B cell (primary cell): ENCODE measurements at regions of chr5 and their contacts with region 1.

Region 1: GRCh38 chr5:132495667-132496190 is 5.2 kb upstream of the IRF1 start:
- DNase-seq: peak; percentile 91
- ATAC-seq: peak; percentile 58
- H3K4me3 ChIP-seq: peak overlapping the region; percentile 42 to 91 (median 84)
- H3K4me3 Mint-ChIP-seq: peak overlapping the region; percentile 97
- H3K27ac ChIP-seq: peak overlapping the region; percentile 85 to 95
- H3K27ac Mint-ChIP-seq: peak overlapping the region; percentile 97
- H3K4me1 ChIP-seq: peaks cover 48 to 59% of the 10 kb centered on the region in 2 donors
- H3K4me1 Mint-ChIP-seq: peaks cover 68% of the 10 kb centered on the region
- H3K27me3 ChIP-seq: no peaks in the 10 kb centered on the region
- H3K27me3 Mint-ChIP-seq: no peaks in the 10 kb centered on the region
- CTCF ChIP-seq: no peak

Region 2: DNA sequence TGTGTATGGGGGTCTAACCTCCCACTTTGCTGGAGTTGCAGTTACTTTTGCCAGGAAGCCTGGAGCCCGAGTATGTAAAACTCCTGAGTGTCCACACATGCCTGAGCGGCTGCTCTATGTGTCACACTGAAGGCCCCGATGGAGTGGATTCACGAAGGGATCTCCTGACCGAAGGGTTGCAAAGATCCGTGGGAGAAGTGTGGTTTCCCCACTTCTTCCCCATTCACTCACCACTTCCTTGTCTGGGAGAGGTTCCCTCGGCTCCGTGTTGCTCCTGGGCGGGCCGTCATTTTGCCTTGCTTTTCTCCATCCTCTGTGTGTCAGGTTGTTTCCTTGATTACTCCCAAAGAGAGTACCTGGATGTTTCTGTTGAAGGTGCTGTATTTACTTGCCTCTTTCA is 451.5 kb before region 1 on chr5:
- CTCF ChIA-PET with region 1: no interaction called
- POLR2A ChIA-PET with region 1: no interaction called
- intact Hi-C with region 1: no loop called
- DNase-seq: no peak
- ATAC-seq: no peak
- H3K4me3 ChIP-seq: no peak overlapping the region
- H3K4me3 Mint-ChIP-seq: no peak overlapping the region
- H3K27ac ChIP-seq: no peak overlapping the region
- H3K27ac Mint-ChIP-seq: no peak overlapping the region
- H3K4me1 ChIP-seq: no peaks in the 10 kb centered on the region
- H3K4me1 Mint-ChIP-seq: no peaks in the 10 kb centered on the region
- H3K27me3 ChIP-seq: peaks cover 0 to 20% (median 6%) of the 10 kb centered on the region in 4 experiments
- H3K27me3 Mint-ChIP-seq: peaks cover 35% of the 10 kb centered on the region
- CTCF ChIP-seq: no peak

Region 3: DNA sequence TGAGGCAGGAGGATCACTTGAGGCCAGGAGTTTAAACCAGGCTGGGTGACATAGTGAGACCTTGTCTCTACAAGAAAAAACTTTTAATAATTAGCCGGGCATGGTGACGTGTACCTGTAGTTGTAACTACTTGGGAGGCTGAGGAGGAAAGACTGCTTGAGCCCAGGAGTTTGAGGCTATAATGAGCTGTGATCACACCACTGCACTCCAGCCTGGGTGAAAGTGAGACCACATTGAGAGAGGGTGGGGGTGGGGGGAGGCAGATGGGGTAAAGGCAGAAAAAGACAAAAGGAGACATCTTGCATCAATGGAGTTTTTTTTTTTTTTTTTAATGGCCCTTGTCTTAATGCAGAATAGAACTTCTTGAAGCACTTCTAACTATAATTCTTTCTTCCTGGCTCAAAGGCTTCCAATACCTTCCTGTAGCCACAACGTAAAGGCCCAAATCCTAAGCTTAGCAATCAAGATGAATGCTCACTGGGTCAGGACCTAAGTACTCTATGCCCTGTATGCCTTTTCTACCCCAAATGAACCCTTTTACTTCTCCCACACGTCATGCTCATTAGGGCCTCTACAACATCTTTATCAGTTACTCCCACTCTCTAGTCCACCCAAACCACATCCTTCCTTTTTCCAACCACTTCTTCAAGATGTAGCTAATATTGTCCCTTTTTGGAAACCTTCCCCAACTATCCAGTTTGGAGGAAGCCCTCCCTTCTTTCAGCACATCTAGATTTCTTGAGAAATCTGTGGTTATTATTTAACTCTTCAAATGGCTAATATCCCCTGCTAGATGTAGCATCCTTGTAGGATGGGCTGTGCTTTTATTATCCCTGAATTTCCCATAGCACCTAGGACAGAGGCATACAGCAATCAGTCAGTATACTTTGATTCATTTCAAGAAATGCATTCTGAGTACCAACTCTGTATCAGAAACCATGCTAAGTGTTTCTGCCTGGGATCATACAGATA is 381.3 kb before region 1 on chr5:
- CTCF ChIA-PET with region 1: no interaction called
- POLR2A ChIA-PET with region 1: no interaction called
- intact Hi-C with region 1: no loop called
- DNase-seq: no peak
- ATAC-seq: no peak
- H3K4me3 ChIP-seq: no peak overlapping the region
- H3K4me3 Mint-ChIP-seq: no peak overlapping the region
- H3K27ac ChIP-seq: no peak overlapping the region
- H3K27ac Mint-ChIP-seq: no peak overlapping the region
- H3K4me1 ChIP-seq: peaks cover 3 to 9% of the 10 kb centered on the region in 2 donors
- H3K4me1 Mint-ChIP-seq: peaks cover 6% of the 10 kb centered on the region
- H3K27me3 ChIP-seq: no peaks in the 10 kb centered on the region
- H3K27me3 Mint-ChIP-seq: no peaks in the 10 kb centered on the region
- CTCF ChIP-seq: no peak

Region 4: GRCh38 chr5:132466433-132467286 is 29.1 kb before region 1 on chr5:
- CTCF ChIA-PET with region 1: interaction called, 31 read pairs
- POLR2A ChIA-PET with region 1: interaction called, 51 read pairs
- intact Hi-C with region 1: no loop called
- DNase-seq: peak; percentile 72
- ATAC-seq: peak; percentile 61
- H3K4me3 ChIP-seq: peak overlapping the region; percentile 10 to 53 (median 35)
- H3K4me3 Mint-ChIP-seq: peak overlapping the region; percentile 62
- H3K27ac ChIP-seq: peak overlapping the region; percentile 70 to 72
- H3K27ac Mint-ChIP-seq: peak overlapping the region; percentile 77
- H3K4me1 ChIP-seq: peaks cover 71 to 83% of the 10 kb centered on the region in 2 donors
- H3K4me1 Mint-ChIP-seq: peaks cover 85% of the 10 kb centered on the region
- H3K27me3 ChIP-seq: no peaks in the 10 kb centered on the region
- H3K27me3 Mint-ChIP-seq: no peaks in the 10 kb centered on the region
- CTCF ChIP-seq: no peak

Region 5: DNA sequence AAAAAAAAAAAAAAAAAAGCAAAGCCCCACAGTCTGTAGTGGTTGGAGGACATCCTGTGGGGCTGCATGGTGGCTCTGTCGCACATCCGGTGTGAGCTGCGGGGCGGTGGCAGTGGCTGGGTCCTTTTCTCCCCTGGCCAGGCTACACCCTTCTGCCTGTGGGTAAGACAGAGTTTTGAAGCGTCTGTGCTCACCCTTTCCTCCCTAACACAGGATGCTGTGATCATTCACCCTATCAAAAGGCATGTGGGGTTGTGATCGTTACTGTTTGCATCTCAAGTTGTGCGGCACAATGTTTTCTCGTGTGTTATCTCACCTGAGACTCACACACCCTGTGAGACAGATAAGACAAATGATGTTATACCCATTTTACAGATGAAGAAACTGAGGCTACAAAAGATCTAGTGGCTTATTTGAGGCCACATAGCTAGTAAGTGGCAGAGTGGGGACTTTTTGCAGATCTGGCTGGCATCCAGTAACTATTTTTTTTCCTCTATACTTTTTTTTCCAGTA is 22.7 kb before region 1 on chr5:
- CTCF ChIA-PET with region 1: interaction called, 60 read pairs
- POLR2A ChIA-PET with region 1: interaction called, 101 read pairs
- intact Hi-C with region 1: no loop called
- DNase-seq: peak; percentile 88
- ATAC-seq: peak; percentile 86
- H3K4me3 ChIP-seq: no peak overlapping the region
- H3K4me3 Mint-ChIP-seq: peak overlapping the region; percentile 83
- H3K27ac ChIP-seq: peak overlapping the region; percentile 81 to 93
- H3K27ac Mint-ChIP-seq: peak overlapping the region; percentile 99
- H3K4me1 ChIP-seq: peaks cover 46 to 75% of the 10 kb centered on the region in 2 donors
- H3K4me1 Mint-ChIP-seq: peaks cover 78% of the 10 kb centered on the region
- H3K27me3 ChIP-seq: no peaks in the 10 kb centered on the region
- H3K27me3 Mint-ChIP-seq: no peaks in the 10 kb centered on the region
- CTCF ChIP-seq: no peak

Region 6: DNA sequence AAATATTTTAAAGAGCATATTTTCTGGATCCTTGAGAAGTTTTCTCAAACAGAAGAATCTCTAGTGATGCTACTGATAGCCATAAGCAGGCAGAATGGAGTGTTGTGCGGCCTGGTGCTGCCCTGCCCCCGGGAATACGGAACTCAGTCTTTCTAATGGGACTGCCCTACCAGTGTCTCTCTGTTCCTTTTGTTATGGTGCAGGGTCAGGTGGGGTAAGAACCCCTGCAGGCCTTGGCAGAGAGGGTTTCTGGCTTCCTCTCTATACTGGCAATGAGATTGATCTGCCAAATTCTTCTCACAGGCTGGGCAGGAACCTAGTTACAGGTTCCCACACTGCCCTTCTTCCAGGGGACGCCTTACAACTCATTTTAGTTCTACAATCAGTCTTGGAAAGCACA is 45.0 kb after region 1 on chr5:
- CTCF ChIA-PET with region 1: no interaction called
- POLR2A ChIA-PET with region 1: no interaction called
- intact Hi-C with region 1: no loop called
- DNase-seq: no peak
- ATAC-seq: no peak
- H3K4me3 ChIP-seq: no peak overlapping the region
- H3K4me3 Mint-ChIP-seq: no peak overlapping the region
- H3K27ac ChIP-seq: no peak overlapping the region
- H3K27ac Mint-ChIP-seq: no peak overlapping the region
- H3K4me1 ChIP-seq: no peaks in the 10 kb centered on the region
- H3K4me1 Mint-ChIP-seq: no peaks in the 10 kb centered on the region
- H3K27me3 ChIP-seq: peaks cover 0 to 8% (median under 1%) of the 10 kb centered on the region in 4 experiments
- H3K27me3 Mint-ChIP-seq: peaks cover 17% of the 10 kb centered on the region
- CTCF ChIP-seq: no peak

Region 7: DNA sequence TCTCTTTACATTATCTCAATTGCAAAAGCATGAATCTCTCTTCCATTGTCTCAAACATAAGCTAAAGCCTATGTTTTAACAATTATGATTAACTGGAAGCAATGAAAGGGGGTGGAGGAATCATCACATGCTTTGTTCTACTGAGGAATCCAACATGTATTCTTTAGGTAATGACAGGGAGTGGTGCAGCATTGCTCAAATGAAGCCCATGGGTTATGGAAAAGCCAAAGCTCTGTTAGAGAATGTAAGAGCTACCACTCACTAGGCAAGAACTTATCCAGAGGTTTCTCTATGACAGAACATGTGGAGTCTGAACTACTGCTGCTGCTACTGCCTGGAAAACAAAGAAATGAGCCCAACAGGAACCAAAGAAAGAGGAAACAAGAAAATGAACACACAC is 212.9 kb after region 1 on chr5:
- CTCF ChIA-PET with region 1: no interaction called
- POLR2A ChIA-PET with region 1: no interaction called
- intact Hi-C with region 1: no loop called
- DNase-seq: no peak
- ATAC-seq: no peak
- H3K4me3 ChIP-seq: no peak overlapping the region
- H3K4me3 Mint-ChIP-seq: no peak overlapping the region
- H3K27ac ChIP-seq: no peak overlapping the region
- H3K27ac Mint-ChIP-seq: no peak overlapping the region
- H3K4me1 ChIP-seq: no peaks in the 10 kb centered on the region
- H3K4me1 Mint-ChIP-seq: no peaks in the 10 kb centered on the region
- H3K27me3 ChIP-seq: no peaks in the 10 kb centered on the region
- H3K27me3 Mint-ChIP-seq: no peaks in the 10 kb centered on the region
- CTCF ChIP-seq: no peak